Right ventricle myocardium inferior (tissue), 1 donor: ENCODE measurements at regions of chr7 and their contacts with region 1.

Region 1: GRCh38 chr7:66628361-66629140 is at the start of gene KCTD7:
- DNase-seq: peak; percentile 99
- ATAC-seq: peak; percentile 97
- total RNA-seq, gene KCTD7: 7.8 TPM

Region 2: DNA sequence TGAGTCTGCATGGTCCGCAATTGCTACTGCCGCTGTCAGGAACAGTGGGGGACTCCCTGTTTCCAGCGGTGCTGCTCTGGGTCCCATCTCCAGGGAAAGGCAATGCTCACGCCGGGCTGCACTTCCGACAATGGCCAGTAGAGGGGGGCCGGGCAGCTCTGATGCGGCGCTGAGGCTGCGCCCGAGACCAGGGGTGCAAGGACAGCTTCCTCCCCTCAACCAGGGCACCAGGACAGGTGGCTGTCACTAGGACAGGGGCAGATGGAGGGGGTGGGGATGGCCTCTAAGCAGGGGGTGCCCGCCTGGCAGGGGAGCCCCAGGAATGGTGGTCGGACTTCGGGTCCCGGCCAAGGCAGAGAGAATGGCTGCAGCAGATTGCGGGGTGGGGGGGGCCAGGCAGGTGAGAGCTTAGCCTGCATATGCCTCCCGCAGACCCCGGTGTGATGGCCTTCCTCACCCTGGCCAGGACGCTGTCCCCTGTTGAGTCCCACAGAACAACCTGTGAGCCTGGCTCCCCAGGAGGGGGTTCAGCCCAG is 70.9 kb before region 1 on chr7:
- intact Hi-C with region 1: loop called (anchors 5 kb)
- DNase-seq: peak; percentile 88
- ATAC-seq: peak; percentile 75

Region 3: GRCh38 chr7:66591799-66592596 is 36.6 kb before region 1 on chr7:
- intact Hi-C with region 1: loop called (anchors 2 kb)
- DNase-seq: peak; percentile 96
- ATAC-seq: peak; percentile 97

Region 4: GRCh38 chr7:66654123-66654732 is 25.7 kb after region 1 on chr7:
- intact Hi-C with region 1: loop called (anchors 2 kb)
- DNase-seq: peak; percentile 99
- ATAC-seq: peak; percentile 98

Region 5: DNA sequence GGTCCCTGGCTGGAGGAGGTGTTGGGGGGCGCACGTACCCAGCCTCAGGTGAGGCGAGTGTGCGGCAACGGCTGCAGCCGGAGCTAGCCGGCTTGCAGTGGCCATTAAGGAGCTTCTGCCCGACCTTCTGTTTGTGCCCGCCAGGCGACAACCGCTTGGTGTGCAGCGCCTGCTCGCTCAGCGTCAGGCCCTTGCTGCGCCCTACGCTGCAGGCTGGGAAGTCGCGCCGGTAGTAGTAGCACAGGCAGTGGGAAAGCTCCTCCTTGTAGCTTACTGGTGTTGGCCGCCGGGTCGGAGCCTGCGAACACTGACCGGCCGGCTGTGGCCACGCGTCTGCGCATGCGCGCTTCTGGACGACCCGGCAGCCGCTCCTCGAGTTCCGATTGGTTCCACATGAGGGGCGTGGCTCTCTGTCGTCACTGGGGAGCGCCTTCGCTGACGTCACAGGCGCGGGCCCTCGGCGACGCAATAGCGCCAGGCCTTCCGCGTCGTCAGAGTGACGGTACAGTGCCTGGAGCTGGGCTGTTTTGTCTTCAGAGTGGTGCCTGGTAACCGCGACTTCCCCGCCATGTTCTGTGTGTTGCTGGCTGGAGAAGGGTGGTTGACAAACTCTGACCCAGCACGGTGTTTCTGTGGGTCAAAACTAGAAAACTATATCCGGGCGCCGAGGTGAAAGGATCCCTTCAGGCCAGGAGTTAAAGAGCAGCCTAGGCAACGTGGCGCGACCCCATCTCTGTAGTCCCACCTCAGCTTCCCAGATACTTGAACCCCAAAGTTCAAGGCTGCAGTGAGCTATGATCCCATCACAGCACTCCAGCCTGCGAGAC is 216.2 kb after region 1 on chr7:
- intact Hi-C with region 1: loop called (anchors 10 kb)
- DNase-seq: peak; percentile 98
- ATAC-seq: peak; percentile 98